H1 (cell line): ENCODE measurements at regions of chr2 and their contacts with region 1.

Region 1: GRCh38 chr2:112626604-112627059 is 19.1 kb upstream of the SLC20A1 start:
- DNase-seq: peak in 1 of 2 experiments; percentile 65
- H3K4me3 ChIP-seq: no peak overlapping the region
- H3K27ac ChIP-seq: no peak overlapping the region
- H3K4me1 ChIP-seq: peaks cover 0 to 7% (median 5%) of the 10 kb centered on the region in 4 experiments; a peak in 4 of 7 replicates
- H3K27me3 ChIP-seq: no peaks in the 10 kb centered on the region
- CTCF ChIP-seq: peak; percentile 87 to 90 (median 89)
- EP300 ChIP-seq: no peak
- POLR2A ChIP-seq: no peak
- RAD21 ChIP-seq: peak; percentile 86 to 90

Region 2: DNA sequence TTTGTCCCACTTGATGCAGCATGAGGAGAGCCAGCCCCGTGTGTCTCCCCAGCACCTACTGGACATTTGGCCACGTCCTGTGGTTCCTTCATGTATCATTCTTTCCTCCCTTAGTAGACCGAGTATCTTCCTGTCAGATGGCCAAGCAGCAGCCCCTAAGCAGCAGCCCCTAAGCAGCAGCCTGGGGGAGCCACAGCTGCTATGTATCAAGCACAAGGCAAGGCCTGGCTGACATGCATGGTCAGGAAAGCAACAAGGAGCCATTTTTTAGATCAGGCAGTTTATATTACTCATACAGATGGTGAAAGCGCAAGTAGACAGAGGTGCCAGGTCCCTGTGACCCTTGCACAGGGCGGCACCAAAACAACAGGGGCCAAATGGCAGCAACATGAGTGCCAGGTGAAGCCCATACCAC is 20.1 kb before region 1 on chr2:
- CTCF ChIA-PET with region 1: interaction called, 57 read pairs
- POLR2A ChIA-PET with region 1: no interaction called
- DNase-seq: no peak
- H3K4me3 ChIP-seq: no peak overlapping the region
- H3K27ac ChIP-seq: no peak overlapping the region
- H3K4me1 ChIP-seq: no peaks in the 10 kb centered on the region
- H3K27me3 ChIP-seq: no peaks in the 10 kb centered on the region
- CTCF ChIP-seq: no peak
- EP300 ChIP-seq: no peak
- POLR2A ChIP-seq: no peak
- RAD21 ChIP-seq: no peak

Region 3: DNA sequence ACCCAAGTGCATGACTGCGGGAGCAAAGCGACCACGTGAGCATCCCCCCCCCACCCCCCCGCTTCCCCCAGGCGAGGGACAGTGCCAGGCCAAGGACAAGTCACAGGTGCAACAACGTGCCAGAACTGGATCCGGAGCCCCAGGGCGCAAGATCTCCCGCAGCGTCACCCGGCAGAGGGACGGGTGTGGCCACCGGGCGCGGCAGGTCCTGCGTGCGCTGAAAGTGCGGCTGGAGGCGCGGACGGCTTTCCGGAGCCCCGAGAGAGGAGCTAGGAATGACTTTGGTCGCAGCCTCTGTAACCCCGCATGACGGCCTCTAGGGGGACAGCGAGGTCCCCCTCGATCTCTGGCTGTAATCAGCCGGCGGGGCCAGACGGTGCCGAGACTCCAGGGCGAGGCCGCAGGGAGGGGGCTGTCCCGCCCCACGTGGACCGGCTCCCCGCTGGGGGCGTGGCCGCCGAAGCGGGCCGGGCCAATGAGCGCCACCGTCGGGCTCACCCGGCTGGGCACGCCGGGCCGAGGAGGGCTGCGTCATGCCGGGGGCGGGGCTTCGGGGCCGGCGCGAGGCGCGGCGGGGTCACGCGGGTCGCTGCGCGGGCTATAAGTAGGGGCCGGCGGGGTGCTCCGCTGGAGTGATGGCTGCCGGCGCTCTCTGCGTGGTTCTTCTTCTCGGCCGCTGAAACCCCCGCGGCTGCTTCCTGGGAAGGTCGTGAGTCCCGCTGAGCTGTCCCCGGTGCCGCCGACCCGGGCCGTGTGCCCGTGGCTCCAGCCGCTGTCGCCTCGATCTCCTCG is 18.9 kb after region 1 on chr2 and contains the start of gene SLC20A1:
- CTCF ChIA-PET with region 1: interaction called, 39 read pairs
- POLR2A ChIA-PET with region 1: interaction called, 33 read pairs
- DNase-seq: peak; percentile 90 to 98
- H3K4me3 ChIP-seq: peak within 1 kb of the TSS; percentile 80 to 99 (median 93)
- H3K27ac ChIP-seq: peak within 1 kb of the TSS; percentile 98
- H3K4me1 ChIP-seq: peaks cover 3 to 12% (median 7%) of the 10 kb centered on the region in 4 experiments; a peak in 5 of 7 replicates
- H3K27me3 ChIP-seq: peaks cover 0 to 5% (median 0%) of the 10 kb centered on the region in 4 experiments; a peak in 3 of 7 replicates
- CTCF ChIP-seq: peak; percentile 55 to 75 (median 70)
- EP300 ChIP-seq: peak in 1 of 2 experiments; percentile 84; a peak in 1 of 3 replicates
- POLR2A ChIP-seq: peak; percentile 97
- RAD21 ChIP-seq: peak; percentile 35 to 52
- total RNA-seq, gene SLC20A1: 105 and 106 TPM in 2 replicates

Region 4: DNA sequence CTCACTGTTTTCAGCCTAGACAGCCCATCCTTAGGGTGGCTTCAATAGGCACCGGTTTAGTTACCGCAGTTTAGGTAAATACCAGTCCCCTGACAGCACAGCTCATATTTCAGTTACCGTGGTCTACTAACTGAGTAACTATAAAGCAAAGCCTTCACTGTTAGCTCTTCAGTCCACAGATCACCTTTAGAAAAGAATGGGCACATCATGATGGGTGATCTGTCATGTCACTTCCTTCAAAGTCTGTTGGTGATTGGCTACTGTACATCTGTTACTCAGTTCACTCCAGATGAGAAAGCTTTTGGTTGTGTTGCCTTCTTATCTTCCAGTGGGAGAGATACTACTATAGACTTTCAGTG is 40.1 kb after region 1 on chr2:
- CTCF ChIA-PET with region 1: interaction called, 31 read pairs
- POLR2A ChIA-PET with region 1: interaction called, 3 read pairs
- DNase-seq: no peak
- H3K4me3 ChIP-seq: no peak overlapping the region
- H3K27ac ChIP-seq: no peak overlapping the region
- H3K4me1 ChIP-seq: no peaks in the 10 kb centered on the region
- H3K27me3 ChIP-seq: no peaks in the 10 kb centered on the region
- CTCF ChIP-seq: no peak
- EP300 ChIP-seq: no peak
- POLR2A ChIP-seq: no peak
- RAD21 ChIP-seq: no peak

Region 5: GRCh38 chr2:112692496-112692911 is 65.9 kb after region 1 on chr2:
- CTCF ChIA-PET with region 1: interaction called, 37 read pairs
- POLR2A ChIA-PET with region 1: no interaction called
- DNase-seq: peak; percentile 13 to 41
- H3K4me3 ChIP-seq: no peak overlapping the region
- H3K27ac ChIP-seq: no peak overlapping the region
- H3K4me1 ChIP-seq: peaks cover 0 to 6% (median 3%) of the 10 kb centered on the region in 4 experiments; a peak in 4 of 7 replicates
- H3K27me3 ChIP-seq: no peaks in the 10 kb centered on the region
- CTCF ChIP-seq: no peak
- EP300 ChIP-seq: no peak
- POLR2A ChIP-seq: no peak
- RAD21 ChIP-seq: no peak

Region 6: DNA sequence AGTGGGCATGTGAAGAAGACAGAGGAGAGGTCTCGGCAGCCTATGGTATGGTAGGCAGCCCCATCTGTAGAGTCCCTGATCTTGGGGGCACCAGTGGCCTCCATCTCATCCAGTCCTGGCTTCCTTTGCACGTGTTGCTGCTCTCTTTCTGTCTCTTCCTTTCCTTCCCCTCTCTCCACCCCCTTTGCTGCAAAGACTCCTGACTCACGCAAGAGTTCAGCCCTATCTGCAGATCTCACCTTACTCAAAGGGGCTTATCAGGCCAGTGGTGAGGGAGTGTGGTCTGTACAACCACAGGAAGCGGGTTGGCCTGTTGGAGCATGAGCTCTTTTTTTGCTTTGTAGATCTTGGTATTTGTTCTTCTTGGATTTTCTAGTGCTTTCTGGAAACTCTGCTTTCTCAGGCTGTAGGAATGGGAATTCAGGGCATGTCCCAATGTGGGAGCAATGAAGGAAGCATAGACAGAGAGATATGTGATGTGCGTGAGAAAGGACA is 79.6 kb after region 1 on chr2:
- CTCF ChIA-PET with region 1: interaction called, 15 read pairs
- POLR2A ChIA-PET with region 1: no interaction called
- DNase-seq: no peak
- H3K4me3 ChIP-seq: no peak overlapping the region
- H3K27ac ChIP-seq: no peak overlapping the region
- H3K4me1 ChIP-seq: no peaks in the 10 kb centered on the region
- H3K27me3 ChIP-seq: no peaks in the 10 kb centered on the region
- CTCF ChIP-seq: no peak
- EP300 ChIP-seq: no peak
- POLR2A ChIP-seq: no peak
- RAD21 ChIP-seq: no peak